ENCODE measurements at regions of chr10 and their contacts with region 1.

Region 1: GRCh38 chr10:110279407-110279986 is 25.2 kb downstream of the SMNDC1 start:
- DNase-seq: peak in 13 of 14 experiments; percentile 9 to 80 (median 28)
- ATAC-seq: peak; percentile 78
- H3K4me3 ChIP-seq: no peak overlapping the region
- H3K4me3 Mint-ChIP-seq: no peak overlapping the region
- H3K27ac ChIP-seq: no peak overlapping the region
- H3K27ac Mint-ChIP-seq: no peak overlapping the region
- H3K4me1 ChIP-seq: peaks cover 5% of the 10 kb centered on the region
- H3K4me1 Mint-ChIP-seq: peaks cover 44% of the 10 kb centered on the region
- H3K27me3 ChIP-seq: no peaks in the 10 kb centered on the region
- H3K27me3 Mint-ChIP-seq: no peaks in the 10 kb centered on the region
- CTCF ChIP-seq: peak; percentile 70

Region 2: DNA sequence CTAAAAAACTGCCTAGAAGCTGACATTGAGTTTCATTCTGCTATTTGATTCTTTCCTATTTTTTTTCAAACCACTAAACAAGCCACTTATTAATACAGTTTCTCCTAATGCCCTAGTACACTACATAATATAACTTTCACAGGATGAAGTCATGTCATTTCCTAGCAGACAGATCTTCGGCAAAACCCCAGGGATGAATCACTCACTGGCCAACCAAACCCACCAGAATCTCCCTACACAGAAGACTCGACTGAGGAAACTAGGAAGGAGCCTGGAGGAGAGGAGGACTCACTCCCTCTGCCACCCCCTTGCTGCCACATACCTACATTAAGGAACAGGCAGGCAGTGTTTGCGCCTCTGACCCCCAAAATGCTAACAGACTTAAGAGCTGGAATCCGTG is 389.6 kb before region 1 on chr10:
- CTCF ChIA-PET with region 1: no interaction called
- POLR2A ChIA-PET with region 1: no interaction called
- intact Hi-C with region 1: loop called in 1 of 2 experiments (anchors 5 kb)
- DNase-seq: no peak
- ATAC-seq: no peak
- H3K4me3 ChIP-seq: no peak overlapping the region
- H3K4me3 Mint-ChIP-seq: no peak overlapping the region
- H3K27ac ChIP-seq: no peak overlapping the region
- H3K27ac Mint-ChIP-seq: peak overlapping the region; percentile 37
- H3K4me1 ChIP-seq: peaks cover 13% of the 10 kb centered on the region
- H3K4me1 Mint-ChIP-seq: peaks cover 22% of the 10 kb centered on the region
- H3K27me3 ChIP-seq: no peaks in the 10 kb centered on the region
- H3K27me3 Mint-ChIP-seq: no peaks in the 10 kb centered on the region
- CTCF ChIP-seq: no peak

Region 3: DNA sequence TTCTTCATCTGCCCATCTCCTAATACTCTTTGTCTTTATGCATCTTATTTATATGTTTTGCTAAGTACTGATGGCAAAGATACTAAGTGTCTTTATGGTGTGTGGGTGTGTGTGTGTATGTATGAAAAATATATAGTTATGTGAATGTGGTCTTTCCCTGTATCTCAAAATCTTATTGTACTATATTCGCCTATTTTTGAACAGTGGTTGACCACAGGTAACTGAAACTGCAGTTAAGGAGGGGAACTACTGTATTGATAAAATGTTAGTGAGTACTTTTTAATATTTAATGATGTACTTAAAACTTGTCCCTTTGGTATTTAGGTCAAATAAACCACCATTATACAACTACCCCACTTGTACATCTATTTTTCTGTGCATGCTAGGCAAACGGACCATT is 185.8 kb before region 1 on chr10:
- CTCF ChIA-PET with region 1: no interaction called
- POLR2A ChIA-PET with region 1: no interaction called
- intact Hi-C with region 1: no loop called
- DNase-seq: no peak
- ATAC-seq: no peak
- H3K4me3 ChIP-seq: no peak overlapping the region
- H3K4me3 Mint-ChIP-seq: peak overlapping the region; percentile 5
- H3K27ac ChIP-seq: no peak overlapping the region
- H3K27ac Mint-ChIP-seq: peak overlapping the region; percentile 15
- H3K4me1 ChIP-seq: peaks cover 12% of the 10 kb centered on the region
- H3K4me1 Mint-ChIP-seq: peaks cover 90% of the 10 kb centered on the region
- H3K27me3 ChIP-seq: no peaks in the 10 kb centered on the region
- H3K27me3 Mint-ChIP-seq: no peaks in the 10 kb centered on the region
- CTCF ChIP-seq: no peak

Region 4: DNA sequence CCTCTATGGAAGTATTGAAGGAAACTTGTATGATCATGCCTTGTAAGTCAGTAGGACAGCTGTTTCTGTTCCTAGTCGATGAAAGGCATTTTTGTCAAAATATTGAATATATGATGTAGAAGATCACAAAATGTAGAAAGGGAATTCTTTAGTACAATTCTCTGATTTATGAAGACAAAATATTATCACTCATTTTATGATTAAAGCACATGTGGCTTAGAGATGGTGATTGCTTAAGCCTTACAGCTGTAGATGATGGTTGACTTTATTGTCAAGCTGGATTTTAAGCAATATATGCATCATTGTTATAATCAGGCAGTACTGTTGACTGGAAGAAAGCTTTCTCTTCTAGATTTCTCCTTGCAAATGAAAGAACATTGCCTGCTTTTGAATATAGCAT is 45.7 kb before region 1 on chr10:
- CTCF ChIA-PET with region 1: no interaction called
- POLR2A ChIA-PET with region 1: interaction called, 5 read pairs
- intact Hi-C with region 1: loop called in 1 of 2 experiments (anchors 5 kb)
- DNase-seq: no peak
- ATAC-seq: no peak
- H3K4me3 ChIP-seq: no peak overlapping the region
- H3K4me3 Mint-ChIP-seq: no peak overlapping the region
- H3K27ac ChIP-seq: no peak overlapping the region
- H3K27ac Mint-ChIP-seq: no peak overlapping the region
- H3K4me1 ChIP-seq: no peaks in the 10 kb centered on the region
- H3K4me1 Mint-ChIP-seq: peaks cover 21% of the 10 kb centered on the region
- H3K27me3 ChIP-seq: no peaks in the 10 kb centered on the region
- H3K27me3 Mint-ChIP-seq: no peaks in the 10 kb centered on the region
- CTCF ChIP-seq: no peak

Measured in CD4-positive, alpha-beta T cell (primary cell).